ENCODE measurements at regions of chr16 and their contacts with region 1.

Region 1: GRCh38 chr16:27571433-27572326 is 21.7 kb downstream of the KATNIP start:
- DNase-seq: no peak
- ATAC-seq: no peak
- H3K4me3 Mint-ChIP-seq: no peak overlapping the region
- H3K27ac Mint-ChIP-seq: no peak overlapping the region
- H3K4me1 Mint-ChIP-seq: peaks cover 4% of the 10 kb centered on the region
- H3K27me3 Mint-ChIP-seq: no peaks in the 10 kb centered on the region
- CTCF ChIP-seq: no peak

Region 2: DNA sequence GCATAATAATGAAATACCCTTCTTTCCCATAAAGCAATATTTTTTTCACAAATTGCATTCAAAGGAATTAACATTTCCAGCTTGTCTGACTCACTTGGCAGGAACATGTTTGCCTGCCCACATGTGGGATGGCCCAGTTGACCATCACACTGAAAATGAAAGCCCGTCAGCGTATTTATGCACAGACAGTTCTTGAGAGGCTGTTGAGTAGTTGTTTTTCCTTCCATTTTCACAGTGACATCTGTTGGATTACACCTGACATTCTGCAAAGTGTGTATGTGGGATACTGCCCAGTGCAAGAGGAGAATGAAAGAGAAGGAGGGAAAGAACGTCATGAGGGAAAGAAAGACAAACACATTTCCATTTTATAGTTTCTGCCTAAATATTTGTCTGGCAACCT is 1850.2 kb before region 1 on chr16:
- CTCF ChIA-PET with region 1: no interaction called
- POLR2A ChIA-PET with region 1: interaction called, 13 read pairs
- intact Hi-C with region 1: no loop called
- DNase-seq: no peak
- ATAC-seq: no peak
- H3K4me3 Mint-ChIP-seq: no peak overlapping the region
- H3K27ac Mint-ChIP-seq: no peak overlapping the region
- H3K4me1 Mint-ChIP-seq: no peaks in the 10 kb centered on the region
- H3K27me3 Mint-ChIP-seq: no peaks in the 10 kb centered on the region
- CTCF ChIP-seq: no peak

Region 3: GRCh38 chr16:27495191-27495590 is 76.5 kb before region 1 on chr16:
- CTCF ChIA-PET with region 1: no interaction called
- POLR2A ChIA-PET with region 1: no interaction called
- intact Hi-C with region 1: no loop called
- DNase-seq: no peak
- ATAC-seq: no peak
- H3K4me3 Mint-ChIP-seq: no peak overlapping the region
- H3K27ac Mint-ChIP-seq: no peak overlapping the region
- H3K4me1 Mint-ChIP-seq: no peaks in the 10 kb centered on the region
- H3K27me3 Mint-ChIP-seq: no peaks in the 10 kb centered on the region
- CTCF ChIP-seq: no peak